ENCODE measurements at regions of chr12 and their contacts with region 1.

Region 1: DNA sequence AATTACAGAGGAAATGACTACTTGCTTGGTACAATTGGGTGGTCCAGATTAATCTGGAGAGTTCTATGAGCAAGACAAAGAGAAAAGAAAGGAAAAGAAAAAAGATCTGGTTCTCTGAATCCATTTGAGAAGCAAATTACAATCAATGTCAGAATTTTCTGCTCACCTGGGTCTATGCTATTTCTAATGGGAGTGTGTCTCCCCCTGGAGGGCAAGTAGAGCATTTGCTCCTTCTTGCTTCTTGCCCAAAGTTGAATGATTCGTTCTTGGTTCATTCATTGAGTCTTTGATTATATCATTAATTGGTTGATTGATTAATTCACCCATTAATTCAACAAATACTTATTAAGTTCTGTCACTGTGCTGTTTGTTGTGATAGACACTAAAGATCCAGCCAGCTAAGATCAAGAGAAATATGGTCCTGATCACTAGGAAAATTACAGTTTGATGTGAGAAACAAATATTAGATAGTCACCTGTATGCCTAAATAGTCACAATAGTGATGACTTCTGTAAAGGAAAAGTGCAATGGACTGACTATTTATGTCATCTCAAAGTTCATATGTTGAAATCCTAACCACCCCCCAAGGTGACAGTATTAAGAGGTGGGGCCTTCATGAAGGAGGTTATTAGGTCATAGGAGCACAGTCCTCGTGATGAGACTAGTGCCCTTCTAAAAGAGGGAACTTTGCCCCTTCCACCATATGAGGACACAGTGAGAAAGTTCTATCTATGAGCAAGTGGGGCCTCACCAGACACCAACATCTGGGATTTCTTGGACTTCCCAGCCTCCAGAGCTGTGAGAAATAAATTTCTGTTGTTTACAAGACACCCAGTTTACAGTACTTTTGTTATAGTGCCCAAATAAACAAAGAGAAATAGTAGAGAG is 8.0 kb upstream of the ASB8 start:
- DNase-seq: no peak
- H3K4me3 ChIP-seq: no peak overlapping the region
- H3K27ac ChIP-seq: no peak overlapping the region
- H3K4me1 ChIP-seq: no peaks in the 10 kb centered on the region
- H3K27me3 ChIP-seq: no peaks in the 10 kb centered on the region
- CTCF ChIP-seq: peak; percentile 54 to 86 (median 74)
- EP300 ChIP-seq: no peak
- POLR2A ChIP-seq: no peak

Region 2: GRCh38 chr12:47715393-47715876 is 449.9 kb before region 1 on chr12:
- intact Hi-C with region 1: no loop called
- DNase-seq: peak; percentile 94
- H3K4me3 ChIP-seq: peak overlapping the region in 1 of 4 donors; percentile 13
- H3K27ac ChIP-seq: peak overlapping the region; percentile 79 to 88 (median 85)
- H3K4me1 ChIP-seq: peaks cover 0 to 46% (median 38%) of the 10 kb centered on the region in 4 donors
- H3K27me3 ChIP-seq: no peaks in the 10 kb centered on the region
- CTCF ChIP-seq: peak; percentile 63 to 85 (median 74)
- EP300 ChIP-seq: no peak
- POLR2A ChIP-seq: no peak

Region 3: DNA sequence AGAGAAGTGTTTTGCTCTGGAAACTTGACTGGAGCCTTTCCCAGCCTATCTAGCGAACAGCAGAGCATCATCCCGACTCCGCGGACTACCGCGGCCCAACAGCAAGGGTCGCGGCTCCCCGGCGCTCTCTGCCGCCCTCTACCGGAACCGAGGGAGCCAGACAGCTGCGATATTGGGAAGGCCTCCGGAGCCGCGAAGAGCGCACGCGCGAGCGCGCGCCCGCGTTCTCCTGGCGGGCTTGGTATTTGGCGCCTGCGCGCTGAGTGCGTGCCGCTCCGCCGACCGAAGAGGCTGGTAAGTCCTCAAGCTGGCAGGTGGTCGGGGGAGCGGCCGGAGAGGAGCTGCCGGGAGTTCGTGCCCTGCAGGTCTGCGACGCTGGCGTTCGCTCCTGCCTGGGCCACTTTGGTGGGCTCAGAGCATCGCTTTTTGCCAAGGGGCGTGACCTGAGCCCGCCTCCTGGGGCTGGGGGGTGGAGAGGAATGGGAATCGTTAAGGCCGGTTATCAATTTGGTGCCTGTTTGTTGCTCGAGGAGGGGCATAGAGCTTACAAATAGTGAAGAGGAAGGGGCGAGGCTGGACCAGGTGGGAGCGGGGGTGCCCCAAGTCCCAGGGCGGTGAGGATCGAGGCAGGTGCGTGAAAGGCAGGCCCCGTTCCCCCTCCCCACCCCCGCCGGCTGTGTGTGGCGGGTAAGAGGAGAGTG is 201.8 kb before region 1 on chr12 and contains the start of gene TMEM106C:
- intact Hi-C with region 1: loop called (anchors 10 kb)
- DNase-seq: peak; percentile 95
- H3K4me3 ChIP-seq: peak within 1 kb of the TSS; percentile 73 to 90 (median 80)
- H3K27ac ChIP-seq: peak within 1 kb of the TSS; percentile 73 to 82 (median 75)
- H3K4me1 ChIP-seq: peaks cover 0 to 23% (median 15%) of the 10 kb centered on the region in 4 donors
- H3K27me3 ChIP-seq: no peaks in the 10 kb centered on the region
- CTCF ChIP-seq: peak; percentile 87 to 97 (median 92)
- EP300 ChIP-seq: no peak
- POLR2A ChIP-seq: peak in 1 of 2 donors; percentile 46
- total RNA-seq, gene TMEM106C: 46.2 to 122 (median 92.2) TPM

Region 4: GRCh38 chr12:48109424-48109823 is 55.9 kb before region 1 on chr12:
- intact Hi-C with region 1: no loop called
- DNase-seq: no peak
- H3K4me3 ChIP-seq: no peak overlapping the region
- H3K27ac ChIP-seq: no peak overlapping the region
- H3K4me1 ChIP-seq: peaks cover 0 to 16% (median 15%) of the 10 kb centered on the region in 4 donors
- H3K27me3 ChIP-seq: no peaks in the 10 kb centered on the region
- CTCF ChIP-seq: no peak
- EP300 ChIP-seq: no peak
- POLR2A ChIP-seq: no peak

Region 5: GRCh38 chr12:48119834-48120195 is 45.5 kb before region 1 on chr12:
- intact Hi-C with region 1: no loop called
- DNase-seq: no peak
- H3K4me3 ChIP-seq: peak overlapping the region; percentile 44 to 71 (median 66)
- H3K27ac ChIP-seq: peak overlapping the region; percentile 68 to 84 (median 77)
- H3K4me1 ChIP-seq: peaks cover 0 to 22% (median 20%) of the 10 kb centered on the region in 4 donors
- H3K27me3 ChIP-seq: no peaks in the 10 kb centered on the region
- CTCF ChIP-seq: no peak
- EP300 ChIP-seq: no peak
- POLR2A ChIP-seq: no peak

Measured in sigmoid colon (tissue), 7 donors.